ENCODE measurements at regions of chr3 and their contacts with region 1.

Region 1: GRCh38 chr3:63911873-63912767 is at the start of gene SCAANT1:
- DNase-seq: peak; percentile 69 to 91 (median 82)
- ATAC-seq: peak; percentile 68 to 74
- H3K4me3 Mint-ChIP-seq: peak within 1 kb of the TSS; percentile 87 to 94 (median 92)
- H3K27ac Mint-ChIP-seq: peak within 1 kb of the TSS; percentile 79 to 98 (median 96)
- H3K4me1 Mint-ChIP-seq: peaks cover 9 to 49% (median 34%) of the 10 kb centered on the region in 4 donors
- H3K27me3 Mint-ChIP-seq: no peaks in the 10 kb centered on the region
- polyA plus RNA-seq, gene SCAANT1: not detected

Region 2: GRCh38 chr3:63863148-63864007 is 48.7 kb before region 1 on chr3 and contains the starts of genes ATXN7 and THOC7:
- POLR2A ChIA-PET with region 1: interaction called, 11 read pairs
- DNase-seq: peak; percentile 56 to 79 (median 67)
- ATAC-seq: peak; percentile 82 to 84
- H3K4me3 Mint-ChIP-seq: peak within 1 kb of the TSS; percentile 88 to 96 (median 93)
- H3K27ac Mint-ChIP-seq: peak within 1 kb of the TSS; percentile 80 to 97 (median 94)
- H3K4me1 Mint-ChIP-seq: peaks cover 36 to 70% (median 67%) of the 10 kb centered on the region in 4 donors
- H3K27me3 Mint-ChIP-seq: no peaks in the 10 kb centered on the region
- polyA plus RNA-seq, gene ATXN7: 18.0 to 29.8 (median 21.9) TPM
- polyA plus RNA-seq, gene THOC7: 79.9 to 116 (median 100.0) TPM

Region 3: GRCh38 chr3:63951492-63952247 is 39.5 kb after region 1 on chr3:
- POLR2A ChIA-PET with region 1: no interaction called
- DNase-seq: no peak
- ATAC-seq: no peak
- H3K4me3 Mint-ChIP-seq: peak overlapping the region in 6 of 10 donors; percentile 15 to 47 (median 34)
- H3K27ac Mint-ChIP-seq: peak overlapping the region in 8 of 10 donors; percentile 9 to 72 (median 43)
- H3K4me1 Mint-ChIP-seq: peaks cover 24 to 48% (median 42%) of the 10 kb centered on the region in 4 donors
- H3K27me3 Mint-ChIP-seq: no peaks in the 10 kb centered on the region

Region 4: GRCh38 chr3:64023187-64023848 is 111.2 kb after region 1 on chr3 and contains the start of gene PSMD6:
- POLR2A ChIA-PET with region 1: interaction called, 13 read pairs
- DNase-seq: peak; percentile 86 to 99 (median 93)
- ATAC-seq: peak; percentile 93
- H3K4me3 Mint-ChIP-seq: peak within 1 kb of the TSS; percentile 75 to 92 (median 88)
- H3K27ac Mint-ChIP-seq: peak within 1 kb of the TSS; percentile 57 to 96 (median 92)
- H3K4me1 Mint-ChIP-seq: peaks cover 12 to 37% (median 33%) of the 10 kb centered on the region in 4 donors
- H3K27me3 Mint-ChIP-seq: peaks cover 4 to 16% (median 12%) of the 10 kb centered on the region in 5 donors
- polyA plus RNA-seq, gene PSMD6: 107 to 114 (median 110) TPM

Region 5: GRCh38 chr3:65447264-65448027 is 1535.3 kb after region 1 on chr3:
- POLR2A ChIA-PET with region 1: no interaction called
- DNase-seq: no peak
- ATAC-seq: no peak
- H3K4me3 Mint-ChIP-seq: no peak overlapping the region
- H3K27ac Mint-ChIP-seq: no peak overlapping the region
- H3K4me1 Mint-ChIP-seq: no peaks in the 10 kb centered on the region
- H3K27me3 Mint-ChIP-seq: no peaks in the 10 kb centered on the region

Measured in naive thymus-derived CD8-positive, alpha-beta T cell (primary cell).